ENCODE measurements at regions of chr2 and their contacts with region 1.

Region 1: GRCh38 chr2:175167792-175168563 is at the start of gene ATF2:
- DNase-seq: peak; percentile 99 to 100
- ATAC-seq: peak; percentile 99
- H3K4me3 ChIP-seq: peak within 1 kb of the TSS; percentile 58 to 83
- H3K27ac ChIP-seq: peak within 1 kb of the TSS; percentile 51 to 79
- H3K4me1 ChIP-seq: no peaks in the 10 kb centered on the region
- H3K27me3 ChIP-seq: no peaks in the 10 kb centered on the region
- total RNA-seq, gene ATF2: 60.4 to 72.0 TPM

Region 2: GRCh38 chr2:175004980-175005732 is 162.8 kb before region 1 on chr2 and contains the start of gene CHN1:
- intact Hi-C with region 1: loop called in 1 of 2 experiments (anchors 10 kb)
- DNase-seq: peak; percentile 86 to 95
- ATAC-seq: peak; percentile 90
- H3K4me3 ChIP-seq: peak within 1 kb of the TSS; percentile 52 to 80
- H3K27ac ChIP-seq: peak within 1 kb of the TSS; percentile 51 to 83
- H3K4me1 ChIP-seq: peaks cover 2 to 4% of the 10 kb centered on the region in 2 donors
- H3K27me3 ChIP-seq: no peaks in the 10 kb centered on the region
- total RNA-seq, gene CHN1: 23.0 to 25.1 TPM

Region 3: DNA sequence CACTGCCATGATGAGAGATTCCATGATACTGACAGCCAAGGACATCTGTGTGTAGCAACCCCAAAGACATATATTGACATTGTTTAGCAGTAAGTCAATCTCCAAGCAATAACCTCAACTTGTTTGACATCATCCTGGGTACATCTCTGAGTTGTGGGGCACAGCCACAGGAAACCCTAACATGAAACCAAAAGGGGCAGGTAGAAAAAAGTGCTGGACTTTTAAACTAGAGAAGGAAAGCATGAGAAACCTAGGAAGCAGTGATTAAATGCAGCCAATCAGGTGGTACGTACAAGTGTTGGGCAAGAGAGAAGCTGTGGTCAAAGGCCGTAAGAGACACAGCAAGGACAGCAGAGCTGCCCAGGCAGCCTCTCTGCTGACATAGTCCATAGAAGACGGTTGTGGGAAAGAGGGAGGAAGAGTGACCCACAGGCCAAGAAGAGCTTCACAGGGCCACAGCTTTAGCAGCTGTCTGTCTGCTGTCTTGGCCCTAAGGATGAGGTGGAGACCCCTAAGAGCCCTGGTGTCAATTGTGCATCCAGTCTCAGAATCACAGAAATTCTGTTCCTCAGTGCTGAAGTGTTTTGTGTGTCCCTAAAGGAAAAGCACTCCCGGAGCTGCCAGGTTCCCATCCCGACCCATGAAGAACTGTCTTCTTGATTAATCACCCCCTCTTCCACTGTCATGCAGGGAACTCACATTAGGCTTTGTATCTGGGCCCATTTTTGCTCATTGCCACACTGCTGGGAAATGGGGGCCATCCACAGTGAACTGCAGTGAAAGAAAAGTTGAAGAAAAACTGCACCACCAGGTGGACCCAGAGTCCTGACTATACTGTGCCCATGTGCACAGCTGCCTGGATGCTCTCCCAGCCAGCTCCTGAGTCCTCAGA is 137.4 kb before region 1 on chr2:
- intact Hi-C with region 1: loop called in 1 of 2 experiments (anchors 10 kb)
- DNase-seq: no peak
- ATAC-seq: peak; percentile 66
- H3K4me3 ChIP-seq: no peak overlapping the region
- H3K27ac ChIP-seq: no peak overlapping the region
- H3K4me1 ChIP-seq: peaks cover 0 to 2% of the 10 kb centered on the region in 2 donors
- H3K27me3 ChIP-seq: no peaks in the 10 kb centered on the region

Region 4: GRCh38 chr2:175111200-175111657 is 56.7 kb before region 1 on chr2:
- intact Hi-C with region 1: loop called in 1 of 2 experiments (anchors 5 kb)
- DNase-seq: no peak
- ATAC-seq: no peak
- H3K4me3 ChIP-seq: no peak overlapping the region
- H3K27ac ChIP-seq: no peak overlapping the region
- H3K4me1 ChIP-seq: no peaks in the 10 kb centered on the region
- H3K27me3 ChIP-seq: no peaks in the 10 kb centered on the region

Region 5: GRCh38 chr2:175256889-175257585 is 89.1 kb after region 1 on chr2:
- intact Hi-C with region 1: no loop called
- DNase-seq: peak in 1 of 2 donors; percentile 67
- ATAC-seq: no peak
- H3K4me3 ChIP-seq: no peak overlapping the region
- H3K27ac ChIP-seq: no peak overlapping the region
- H3K4me1 ChIP-seq: no peaks in the 10 kb centered on the region
- H3K27me3 ChIP-seq: no peaks in the 10 kb centered on the region

Region 6: GRCh38 chr2:175557810-175558377 is 389.9 kb after region 1 on chr2:
- intact Hi-C with region 1: no loop called
- DNase-seq: no peak
- ATAC-seq: no peak
- H3K4me3 ChIP-seq: no peak overlapping the region
- H3K27ac ChIP-seq: no peak overlapping the region
- H3K4me1 ChIP-seq: no peaks in the 10 kb centered on the region
- H3K27me3 ChIP-seq: no peaks in the 10 kb centered on the region